HAP-1 (cell line): ENCODE measurements at regions of chr20 and their contacts with region 1.

Region 1: DNA sequence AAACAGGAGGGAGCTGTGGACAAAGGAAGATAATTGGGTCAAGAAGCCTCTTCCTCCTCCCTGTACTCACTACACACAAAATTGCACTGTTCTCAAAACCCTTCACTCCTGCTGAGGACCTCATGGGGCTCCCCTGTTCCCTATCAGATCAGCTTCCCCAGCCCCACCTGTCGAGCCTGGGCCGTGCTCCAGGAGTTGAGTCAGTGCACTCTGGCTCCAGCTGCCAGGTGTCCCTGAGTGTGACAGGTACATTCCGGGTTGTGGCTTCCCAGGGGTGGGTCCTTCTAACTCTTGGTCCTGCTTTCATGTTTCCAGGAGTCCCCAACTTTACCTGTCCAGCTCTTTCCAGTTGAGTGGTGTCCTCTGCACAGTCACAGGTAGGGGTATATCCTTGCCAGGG is 8.4 kb downstream of the RAB5IF start:
- DNase-seq: no peak
- H3K4me3 ChIP-seq: no peak overlapping the region
- H3K4me1 ChIP-seq: no peaks in the 10 kb centered on the region
- H3K27me3 ChIP-seq: no peaks in the 10 kb centered on the region

Region 2: GRCh38 chr20:36004045-36004444 is 609.9 kb before region 1 on chr20:
- in situ Hi-C with region 1: no loop called
- DNase-seq: no peak
- H3K4me3 ChIP-seq: no peak overlapping the region
- H3K4me1 ChIP-seq: no peaks in the 10 kb centered on the region
- H3K27me3 ChIP-seq: no peaks in the 10 kb centered on the region

Region 3: GRCh38 chr20:36754656-36755222 is 140.8 kb after region 1 on chr20:
- in situ Hi-C with region 1: loop called (anchors 10 kb)
- DNase-seq: peak; percentile 50 to 58
- H3K4me3 ChIP-seq: no peak overlapping the region
- H3K4me1 ChIP-seq: no peaks in the 10 kb centered on the region
- H3K27me3 ChIP-seq: no peaks in the 10 kb centered on the region

Region 4: GRCh38 chr20:36881888-36882287 is 267.9 kb after region 1 on chr20:
- in situ Hi-C with region 1: loop called (anchors 5 kb)
- DNase-seq: no peak
- H3K4me3 ChIP-seq: no peak overlapping the region
- H3K4me1 ChIP-seq: 0 out of 2 replicates have a peak, but pooled peaks cover 1% of the 10 kb centered on the region
- H3K27me3 ChIP-seq: no peaks in the 10 kb centered on the region